Aorta (tissue), 5 donors: ENCODE measurements at regions of chr6 and their contacts with region 1.

Region 1: GRCh38 chr6:143575440-143575839 is 63.9 kb upstream of the FUCA2 start:
- DNase-seq: peak in 1 of 2 donors; percentile 55
- ATAC-seq: peak; percentile 92
- H3K4me3 ChIP-seq: no peak overlapping the region
- H3K27ac ChIP-seq: no peak overlapping the region
- H3K4me1 ChIP-seq: peaks cover 0 to 6% of the 10 kb centered on the region in 2 donors
- H3K27me3 ChIP-seq: no peaks in the 10 kb centered on the region

Region 2: DNA sequence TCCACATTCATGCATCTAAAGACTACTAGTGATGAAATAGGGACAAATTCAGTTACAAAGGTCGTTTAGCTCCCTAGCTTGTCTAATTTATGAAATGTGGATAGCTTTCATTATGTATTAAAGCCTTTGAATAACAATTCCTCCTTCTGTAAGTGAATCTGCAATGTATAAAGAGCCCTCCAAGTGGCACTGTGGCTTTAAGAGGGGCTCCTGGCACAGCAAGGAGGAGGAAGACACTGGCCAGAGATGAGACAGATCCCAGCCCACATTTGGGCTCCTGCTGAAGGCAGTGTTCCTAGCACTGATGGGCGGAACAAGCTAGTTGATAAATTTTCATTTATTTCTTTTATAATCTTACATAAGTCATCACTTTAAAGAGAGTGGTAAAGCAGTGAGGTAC is 46.3 kb before region 1 on chr6:
- intact Hi-C with region 1: no loop called
- DNase-seq: no peak
- ATAC-seq: no peak
- H3K4me3 ChIP-seq: no peak overlapping the region
- H3K27ac ChIP-seq: no peak overlapping the region
- H3K4me1 ChIP-seq: no peaks in the 10 kb centered on the region
- H3K27me3 ChIP-seq: no peaks in the 10 kb centered on the region

Region 3: DNA sequence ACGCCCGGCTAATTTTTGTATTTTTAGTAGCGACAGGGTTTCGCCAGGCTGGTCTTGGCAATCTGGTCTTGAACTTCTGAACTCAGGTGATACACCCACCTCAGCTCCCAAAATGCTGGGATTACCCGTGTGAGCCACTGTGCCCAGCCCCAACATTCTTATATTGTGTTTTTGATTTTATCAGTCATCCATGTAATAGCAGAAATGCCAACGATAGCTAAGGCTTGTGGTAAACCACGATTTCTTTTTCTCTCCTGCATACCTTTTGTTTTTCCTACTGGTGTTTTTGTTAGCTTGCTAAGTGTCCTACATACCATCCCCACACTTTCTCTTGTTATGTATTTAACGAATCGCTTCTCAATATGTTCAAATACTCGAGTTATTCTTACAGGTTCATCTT is 114.4 kb after region 1 on chr6:
- intact Hi-C with region 1: loop called in 1 of 2 experiments (anchors 5 kb)
- DNase-seq: no peak
- ATAC-seq: no peak
- H3K4me3 ChIP-seq: no peak overlapping the region
- H3K27ac ChIP-seq: peak overlapping the region; percentile 60 to 78
- H3K4me1 ChIP-seq: peaks cover 6 to 12% of the 10 kb centered on the region in 2 donors
- H3K27me3 ChIP-seq: no peaks in the 10 kb centered on the region

Region 4: DNA sequence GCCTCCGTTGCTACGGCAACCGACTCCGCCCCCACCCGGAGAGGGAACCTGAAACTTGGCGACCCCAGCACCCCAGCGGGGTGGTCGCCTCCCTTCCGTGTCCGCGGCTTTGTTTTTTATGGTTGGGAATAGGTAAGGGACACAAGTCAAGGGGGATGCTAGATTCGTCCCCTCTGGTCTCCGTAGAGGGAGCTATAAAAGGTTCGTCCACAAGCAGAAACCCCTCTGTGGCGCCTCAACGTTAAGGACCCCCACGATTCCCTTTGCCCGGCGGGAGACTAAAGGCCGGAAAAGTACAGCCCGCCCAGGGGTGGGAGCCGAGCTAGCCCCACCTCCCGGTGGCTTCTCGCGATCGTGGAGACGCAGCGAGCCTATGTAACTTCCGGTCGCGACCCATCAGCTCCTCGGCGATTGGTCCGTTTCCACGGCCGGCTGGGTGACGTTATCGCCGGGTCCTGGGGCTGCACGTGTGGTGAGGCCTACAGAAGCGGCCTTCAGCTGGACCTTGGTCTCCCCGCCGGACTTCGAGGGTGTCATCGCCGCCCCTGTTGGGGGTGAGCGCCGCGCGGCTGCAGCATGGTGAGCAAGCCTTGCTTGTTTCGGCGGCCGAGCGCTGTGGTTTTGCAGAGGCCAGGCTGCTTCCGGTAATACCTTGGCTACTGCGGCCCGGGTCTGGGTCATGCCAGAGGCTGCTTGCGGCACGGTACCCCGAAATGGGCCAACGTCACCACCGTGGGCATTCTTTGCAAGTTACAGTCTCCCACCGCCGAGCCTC is 267.6 kb after region 1 on chr6 and contains the start of gene LTV1:
- intact Hi-C with region 1: loop called (anchors 5 to 10 kb)
- DNase-seq: peak; percentile 98
- ATAC-seq: peak; percentile 100
- H3K4me3 ChIP-seq: peak within 1 kb of the TSS; percentile 56 to 71
- H3K27ac ChIP-seq: peak within 1 kb of the TSS; percentile 84 to 92
- H3K4me1 ChIP-seq: peaks cover 0 to 10% of the 10 kb centered on the region in 2 donors
- H3K27me3 ChIP-seq: no peaks in the 10 kb centered on the region
- total RNA-seq, gene LTV1: 16.5 to 16.7 TPM

Region 5: GRCh38 chr6:144013486-144013909 is 438.1 kb after region 1 on chr6:
- intact Hi-C with region 1: loop called (anchors 1 to 2 kb)
- DNase-seq: peak; percentile 83 to 92
- ATAC-seq: peak; percentile 81
- H3K4me3 ChIP-seq: no peak overlapping the region
- H3K27ac ChIP-seq: no peak overlapping the region
- H3K4me1 ChIP-seq: no peaks in the 10 kb centered on the region
- H3K27me3 ChIP-seq: peaks cover 0 to 2% of the 10 kb centered on the region in 2 donors